Esophagus muscularis mucosa (tissue), 4 donors: ENCODE measurements at regions of chrX and their contacts with region 1.

Region 1: DNA sequence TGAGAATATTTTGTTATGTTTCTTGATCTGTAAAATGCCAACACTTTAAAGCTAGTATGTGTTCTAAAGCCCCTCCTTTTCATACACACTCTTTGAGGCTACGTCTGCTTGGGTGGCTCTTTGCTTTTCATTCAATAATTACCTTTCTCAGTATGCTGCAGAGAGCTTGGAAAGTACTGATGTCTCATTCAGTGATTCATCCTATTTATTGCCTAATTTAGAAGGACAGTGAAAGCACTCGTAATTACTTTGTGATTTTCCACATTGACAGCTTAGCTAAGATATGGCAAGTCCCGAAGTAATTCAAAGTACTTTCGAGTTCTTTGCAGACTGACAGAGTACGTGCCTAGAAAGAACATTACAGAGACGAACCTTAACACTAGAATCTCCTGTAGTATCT is 57.2 kb downstream of the BMP15 start:
- DNase-seq: no peak
- H3K4me3 ChIP-seq: no peak overlapping the region
- H3K27ac ChIP-seq: no peak overlapping the region
- H3K4me1 ChIP-seq: no peaks in the 10 kb centered on the region
- H3K27me3 ChIP-seq: no peaks in the 10 kb centered on the region
- CTCF ChIP-seq: no peak
- EP300 ChIP-seq: no peak
- POLR2A ChIP-seq: no peak

Region 2: DNA sequence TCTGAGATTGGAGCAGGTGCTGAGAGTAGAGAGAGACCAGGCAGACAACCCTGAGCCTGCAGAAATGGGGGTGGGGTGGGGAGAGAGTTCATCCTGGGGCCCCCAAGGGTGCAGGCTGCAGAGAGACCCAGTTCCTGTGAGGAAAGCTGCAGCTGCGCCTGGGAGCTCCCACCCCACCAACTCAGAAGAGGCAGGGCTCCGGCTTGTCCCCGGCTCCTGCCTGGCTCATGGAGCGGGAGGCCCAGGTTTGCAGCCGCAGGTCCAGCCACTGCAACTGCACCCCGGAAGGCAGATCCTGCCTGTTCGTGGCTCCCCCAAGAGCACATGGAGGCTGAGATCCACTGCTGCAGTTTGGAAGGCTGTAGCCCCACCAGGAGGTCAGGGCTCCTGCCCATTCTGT is 452.9 kb before region 1 on chrX:
- intact Hi-C with region 1: no loop called
- DNase-seq: no peak
- H3K4me3 ChIP-seq: no peak overlapping the region
- H3K27ac ChIP-seq: no peak overlapping the region
- H3K4me1 ChIP-seq: no peaks in the 10 kb centered on the region
- H3K27me3 ChIP-seq: no peaks in the 10 kb centered on the region
- CTCF ChIP-seq: no peak
- EP300 ChIP-seq: no peak
- POLR2A ChIP-seq: no peak

Region 3: GRCh38 chrX:50865311-50865710 is 102.4 kb before region 1 on chrX:
- intact Hi-C with region 1: no loop called
- DNase-seq: no peak
- H3K4me3 ChIP-seq: no peak overlapping the region
- H3K27ac ChIP-seq: no peak overlapping the region
- H3K4me1 ChIP-seq: no peaks in the 10 kb centered on the region
- H3K27me3 ChIP-seq: no peaks in the 10 kb centered on the region
- CTCF ChIP-seq: no peak
- EP300 ChIP-seq: no peak
- POLR2A ChIP-seq: no peak

Region 4: DNA sequence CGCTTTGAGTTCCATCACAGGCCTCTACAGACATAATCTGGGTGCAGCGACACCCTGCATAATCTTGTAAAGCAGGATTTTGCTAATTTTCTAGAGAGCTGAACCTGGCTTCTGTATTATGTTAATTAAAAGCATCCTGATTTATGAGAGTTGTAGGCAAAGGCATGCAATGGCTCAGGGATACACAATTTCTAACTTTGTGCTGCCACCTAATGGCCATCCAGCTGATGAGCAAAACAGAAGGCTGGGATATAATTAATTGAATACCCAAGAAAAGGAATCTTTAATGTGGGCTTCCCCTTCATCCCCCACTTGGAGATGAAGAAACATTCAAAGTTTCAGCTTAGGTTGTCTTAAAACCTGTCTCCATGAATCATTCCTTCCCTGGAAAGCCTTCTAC is 20.9 kb after region 1 on chrX:
- intact Hi-C with region 1: no loop called
- DNase-seq: no peak
- H3K4me3 ChIP-seq: no peak overlapping the region
- H3K27ac ChIP-seq: no peak overlapping the region
- H3K4me1 ChIP-seq: no peaks in the 10 kb centered on the region
- H3K27me3 ChIP-seq: peaks cover 0 to 5% (median 0%) of the 10 kb centered on the region in 4 donors
- CTCF ChIP-seq: peak; percentile 42 to 47 (median 44)
- EP300 ChIP-seq: no peak
- POLR2A ChIP-seq: no peak

Region 5: GRCh38 chrX:51024077-51024696 is 56.5 kb after region 1 on chrX:
- intact Hi-C with region 1: loop called (anchors 10 kb)
- DNase-seq: no peak
- H3K4me3 ChIP-seq: no peak overlapping the region
- H3K27ac ChIP-seq: no peak overlapping the region
- H3K4me1 ChIP-seq: no peaks in the 10 kb centered on the region
- H3K27me3 ChIP-seq: no peaks in the 10 kb centered on the region
- CTCF ChIP-seq: no peak
- EP300 ChIP-seq: no peak
- POLR2A ChIP-seq: no peak